ENCODE measurements at regions of chr1 and their contacts with region 1.

Region 1: GRCh38 chr1:9890224-9890731 is 19.8 kb downstream of the CTNNBIP1 start:
- DNase-seq: peak; percentile 96
- H3K4me3 ChIP-seq: no peak overlapping the region
- H3K27ac ChIP-seq: peak overlapping the region; percentile 82
- H3K4me1 ChIP-seq: peaks cover 61% of the 10 kb centered on the region
- H3K27me3 ChIP-seq: no peaks in the 10 kb centered on the region
- CTCF ChIP-seq: no peak

Region 2: DNA sequence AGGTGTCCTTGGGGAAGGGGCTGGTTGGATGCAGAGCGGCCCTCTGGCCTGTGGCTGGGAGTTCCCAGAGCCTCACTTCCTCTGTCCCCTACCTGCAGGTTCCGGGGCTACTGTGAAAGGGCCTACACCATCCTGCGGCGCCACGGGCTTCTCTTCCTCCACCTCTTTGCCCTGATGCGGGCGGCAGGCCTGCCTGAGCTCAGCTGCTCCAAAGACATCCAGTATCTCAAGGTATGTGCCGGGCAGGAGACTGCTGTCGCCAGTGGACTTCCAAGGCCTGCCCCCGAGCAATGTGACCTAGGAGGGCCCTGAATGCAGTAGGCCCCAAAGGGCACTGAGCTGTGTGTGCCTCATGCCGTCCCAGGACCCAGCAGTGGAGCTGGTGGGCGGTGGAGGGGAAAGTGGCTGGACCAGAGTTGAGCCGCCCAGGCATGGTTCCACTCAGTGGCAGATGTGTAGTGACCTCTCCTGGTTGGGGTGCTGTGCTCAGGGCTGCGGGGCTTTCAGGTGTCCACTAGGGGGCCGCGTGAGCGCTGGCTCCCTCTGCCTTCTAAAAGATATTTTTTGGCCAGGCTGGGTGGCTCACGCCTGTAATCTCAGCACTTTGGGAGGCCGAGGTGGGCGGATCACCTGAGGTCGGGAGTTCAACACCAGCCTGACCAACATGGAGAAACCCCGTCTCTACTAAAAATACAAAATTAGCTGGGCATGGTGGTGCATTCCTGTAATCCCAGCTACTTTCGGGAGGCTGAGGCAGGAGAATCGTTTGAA is 165.4 kb before region 1 on chr1:
- CTCF ChIA-PET with region 1: interaction called, 27 read pairs
- dilution Hi-C with region 1: no loop called
- in situ Hi-C with region 1: no loop called
- intact Hi-C with region 1: no loop called
- DNase-seq: peak; percentile 45
- H3K4me3 ChIP-seq: no peak overlapping the region
- H3K27ac ChIP-seq: no peak overlapping the region
- H3K4me1 ChIP-seq: peaks cover 27% of the 10 kb centered on the region
- H3K27me3 ChIP-seq: no peaks in the 10 kb centered on the region
- CTCF ChIP-seq: peak; percentile 87 to 91

Region 3: GRCh38 chr1:9823943-9824701 is 66.2 kb before region 1 on chr1 and contains the start of gene CLSTN1:
- CTCF ChIA-PET with region 1: no interaction called
- dilution Hi-C with region 1: loop called (anchors 5 kb)
- in situ Hi-C with region 1: no loop called
- intact Hi-C with region 1: no loop called
- DNase-seq: peak; percentile 76
- H3K4me3 ChIP-seq: peak within 1 kb of the TSS; percentile 52 to 93 (median 91)
- H3K27ac ChIP-seq: peak within 1 kb of the TSS; percentile 72
- H3K4me1 ChIP-seq: peaks cover 27% of the 10 kb centered on the region
- H3K27me3 ChIP-seq: no peaks in the 10 kb centered on the region
- CTCF ChIP-seq: no peak
- total RNA-seq, gene CLSTN1: 229 to 335 TPM

Region 4: GRCh38 chr1:9874959-9875635 is 15.2 kb before region 1 on chr1:
- CTCF ChIA-PET with region 1: no interaction called
- dilution Hi-C with region 1: no loop called
- in situ Hi-C with region 1: no loop called
- intact Hi-C with region 1: loop called (anchors 2 kb)
- DNase-seq: peak; percentile 49
- H3K4me3 ChIP-seq: no peak overlapping the region
- H3K27ac ChIP-seq: no peak overlapping the region
- H3K4me1 ChIP-seq: peaks cover 35% of the 10 kb centered on the region
- H3K27me3 ChIP-seq: no peaks in the 10 kb centered on the region
- CTCF ChIP-seq: peak; percentile 79 to 97

Region 5: GRCh38 chr1:9910425-9911178 is 20.3 kb after region 1 on chr1:
- CTCF ChIA-PET with region 1: interaction called, 5 read pairs
- dilution Hi-C with region 1: no loop called
- in situ Hi-C with region 1: no loop called
- intact Hi-C with region 1: loop called (anchors 1 kb)
- DNase-seq: peak; percentile 99
- H3K4me3 ChIP-seq: peak overlapping the region; percentile 56 to 61 (median 58)
- H3K27ac ChIP-seq: peak overlapping the region; percentile 67
- H3K4me1 ChIP-seq: peaks cover 15% of the 10 kb centered on the region
- H3K27me3 ChIP-seq: no peaks in the 10 kb centered on the region
- CTCF ChIP-seq: no peak

Region 6: GRCh38 chr1:9942939-9943788 is 52.9 kb after region 1 on chr1 and contains the starts of genes LZIC and NMNAT1:
- CTCF ChIA-PET with region 1: interaction called, 4 read pairs
- dilution Hi-C with region 1: no loop called
- in situ Hi-C with region 1: no loop called
- intact Hi-C with region 1: loop called (anchors 5 kb)
- DNase-seq: peak; percentile 95
- H3K4me3 ChIP-seq: peak within 1 kb of the TSS; percentile 66 to 77 (median 67)
- H3K27ac ChIP-seq: peak within 1 kb of the TSS; percentile 95
- H3K4me1 ChIP-seq: peaks cover 5% of the 10 kb centered on the region
- H3K27me3 ChIP-seq: no peaks in the 10 kb centered on the region
- CTCF ChIP-seq: no peak
- total RNA-seq, gene LZIC: 19.8 to 30.6 TPM
- total RNA-seq, gene NMNAT1: 9.7 to 11.1 TPM

Region 7: DNA sequence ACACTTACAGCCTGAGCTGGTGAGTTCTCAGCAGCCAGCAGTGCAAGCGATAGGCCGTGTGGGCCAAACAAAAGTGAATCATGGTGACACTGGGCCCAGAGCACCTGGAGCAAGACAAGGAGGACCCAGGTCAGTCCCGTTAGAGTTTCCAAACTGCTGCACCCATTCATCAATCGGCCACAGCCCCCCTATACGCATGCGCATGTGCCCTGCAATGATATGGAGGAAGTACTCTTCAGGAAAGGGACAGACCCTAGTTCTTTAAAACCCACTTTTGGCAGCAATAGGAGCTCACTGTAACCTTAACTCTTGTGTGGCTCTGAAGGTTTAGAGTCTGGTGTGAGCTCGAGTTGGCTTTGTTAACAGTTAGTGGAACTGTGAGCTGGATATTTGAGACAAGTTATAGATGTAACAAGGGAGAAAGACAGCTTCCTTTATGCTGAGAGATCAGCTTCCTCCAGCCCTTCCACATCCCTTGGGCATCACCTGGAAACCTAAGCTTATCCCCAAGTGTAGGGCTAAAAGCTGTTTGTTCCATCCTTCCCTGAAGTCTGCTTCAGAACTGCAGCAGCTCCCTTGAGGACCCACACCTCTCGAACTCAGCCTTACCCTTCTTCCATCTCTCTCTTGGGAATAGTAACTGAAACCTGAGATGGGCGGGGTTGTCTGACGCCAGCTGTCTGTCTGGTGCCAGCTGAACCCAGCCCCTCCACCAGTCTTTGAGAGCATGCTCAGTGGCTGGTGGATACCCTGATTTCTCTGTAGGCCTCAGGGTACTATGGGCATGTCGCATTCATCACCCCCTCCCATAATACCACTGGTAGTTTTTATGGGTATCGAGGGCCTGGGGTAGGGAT is 70.7 kb after region 1 on chr1:
- CTCF ChIA-PET with region 1: no interaction called
- dilution Hi-C with region 1: loop called (anchors 5 kb)
- in situ Hi-C with region 1: no loop called
- intact Hi-C with region 1: no loop called
- DNase-seq: no peak
- H3K4me3 ChIP-seq: no peak overlapping the region
- H3K27ac ChIP-seq: no peak overlapping the region
- H3K4me1 ChIP-seq: no peaks in the 10 kb centered on the region
- H3K27me3 ChIP-seq: no peaks in the 10 kb centered on the region
- CTCF ChIP-seq: no peak